MCF 10A (cell line): ENCODE measurements at regions of chr7 and their contacts with region 1.

Region 1: GRCh38 chr7:101950434-101951119 is 133.2 kb downstream of the CUX1 start:
- DNase-seq: peak; percentile 72
- H3K4me3 Mint-ChIP-seq: no peak overlapping the region
- H3K27ac Mint-ChIP-seq: no peak overlapping the region
- H3K4me1 Mint-ChIP-seq: peaks cover 23% of the 10 kb centered on the region
- H3K27me3 Mint-ChIP-seq: no peaks in the 10 kb centered on the region
- CTCF ChIP-seq: no peak

Region 2: DNA sequence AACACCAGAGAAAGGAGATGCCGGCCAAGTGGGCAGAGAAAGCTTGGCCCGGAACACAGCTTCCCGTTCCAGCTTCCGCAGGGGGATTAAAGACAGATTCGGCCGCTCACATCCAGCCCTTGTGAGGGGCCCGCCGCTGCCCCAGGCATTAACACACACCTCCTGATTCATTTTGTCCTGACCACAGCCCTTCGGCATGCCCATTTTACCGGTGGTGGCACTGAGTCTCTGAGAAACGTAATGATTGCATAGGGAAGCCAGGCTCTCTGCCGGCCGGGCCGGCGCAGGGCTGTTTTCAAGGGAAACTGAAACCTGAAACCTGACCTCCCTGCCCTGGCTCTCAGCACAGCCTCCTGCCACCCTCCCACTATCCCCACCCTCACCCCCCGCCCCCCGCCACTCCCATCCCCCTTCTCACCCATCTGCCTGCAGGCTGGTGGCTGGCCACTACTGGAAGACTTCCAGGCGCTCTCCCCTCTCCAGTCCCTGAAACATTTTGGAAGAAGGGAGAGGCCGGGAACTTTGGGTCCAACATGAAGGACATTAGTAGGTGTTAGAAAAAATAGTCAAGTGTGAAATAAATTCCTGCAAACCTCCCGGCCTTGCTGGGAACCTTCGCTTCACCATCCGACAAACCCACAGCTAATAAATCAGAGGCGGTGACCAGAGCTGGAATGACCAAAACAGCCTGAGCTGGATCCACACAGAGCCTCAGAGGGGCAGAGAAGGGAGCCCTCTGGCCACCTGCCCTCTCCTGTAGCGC is 216.7 kb before region 1 on chr7:
- CTCF ChIA-PET with region 1: no interaction called
- POLR2A ChIA-PET with region 1: no interaction called
- intact Hi-C with region 1: no loop called
- DNase-seq: peak; percentile 63
- H3K4me3 Mint-ChIP-seq: peak overlapping the region; percentile 23
- H3K27ac Mint-ChIP-seq: peak overlapping the region; percentile 46
- H3K4me1 Mint-ChIP-seq: peaks cover 8% of the 10 kb centered on the region
- H3K27me3 Mint-ChIP-seq: no peaks in the 10 kb centered on the region
- CTCF ChIP-seq: no peak

Region 3: GRCh38 chr7:101856473-101857357 is 93.9 kb before region 1 on chr7:
- CTCF ChIA-PET with region 1: no interaction called
- POLR2A ChIA-PET with region 1: no interaction called
- intact Hi-C with region 1: loop called (anchors 2 kb)
- DNase-seq: peak; percentile 95
- H3K4me3 Mint-ChIP-seq: peak overlapping the region; percentile 70
- H3K27ac Mint-ChIP-seq: peak overlapping the region; percentile 74
- H3K4me1 Mint-ChIP-seq: peaks cover 32% of the 10 kb centered on the region
- H3K27me3 Mint-ChIP-seq: no peaks in the 10 kb centered on the region
- CTCF ChIP-seq: peak; percentile 53

Region 4: GRCh38 chr7:101935521-101936141 is 14.9 kb before region 1 on chr7:
- CTCF ChIA-PET with region 1: no interaction called
- POLR2A ChIA-PET with region 1: no interaction called
- intact Hi-C with region 1: no loop called
- DNase-seq: no peak
- H3K4me3 Mint-ChIP-seq: no peak overlapping the region
- H3K27ac Mint-ChIP-seq: peak overlapping the region; percentile 74
- H3K4me1 Mint-ChIP-seq: peaks cover under 1% of the 10 kb centered on the region
- H3K27me3 Mint-ChIP-seq: no peaks in the 10 kb centered on the region
- CTCF ChIP-seq: no peak